Activated T-helper 2 cell treated with anti-CD3 and anti-CD28 coated beads, Interferon-gamma antibody, Interleukin-2, Interleukin-4, amounts not matched to agents 10 μg/mL and 5 μg/mL and 100 μg/mL, durations not matched to agents 14 hours and 24 hours and 36 hours (primary cell): ENCODE measurements at regions of chr18 and their contacts with region 1.

Region 1: DNA sequence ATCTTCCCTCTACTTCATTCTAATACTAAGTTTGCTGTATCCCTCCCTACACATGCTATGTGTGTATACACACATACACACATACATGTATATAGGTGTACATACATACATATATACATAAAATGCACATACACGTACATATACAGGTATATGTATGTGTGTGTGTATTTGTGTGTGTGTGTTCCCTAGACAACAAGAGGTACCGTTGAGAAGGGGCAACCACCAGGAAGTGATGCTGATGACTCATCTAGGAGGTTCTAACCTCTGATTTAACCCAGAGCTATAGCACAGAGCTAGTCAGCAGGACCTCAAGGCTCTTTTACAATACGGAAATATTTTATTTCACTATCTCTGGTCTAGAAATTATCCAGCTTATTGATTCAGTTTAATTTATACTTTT is 139.2 kb downstream of the LAMA3 start:
- DNase-seq: peak; percentile 52
- H3K4me3 Mint-ChIP-seq: no peak overlapping the region
- H3K27ac Mint-ChIP-seq: peak overlapping the region; percentile 76
- H3K4me1 Mint-ChIP-seq: peaks cover 46% of the 10 kb centered on the region
- H3K27me3 Mint-ChIP-seq: no peaks in the 10 kb centered on the region

Region 2: DNA sequence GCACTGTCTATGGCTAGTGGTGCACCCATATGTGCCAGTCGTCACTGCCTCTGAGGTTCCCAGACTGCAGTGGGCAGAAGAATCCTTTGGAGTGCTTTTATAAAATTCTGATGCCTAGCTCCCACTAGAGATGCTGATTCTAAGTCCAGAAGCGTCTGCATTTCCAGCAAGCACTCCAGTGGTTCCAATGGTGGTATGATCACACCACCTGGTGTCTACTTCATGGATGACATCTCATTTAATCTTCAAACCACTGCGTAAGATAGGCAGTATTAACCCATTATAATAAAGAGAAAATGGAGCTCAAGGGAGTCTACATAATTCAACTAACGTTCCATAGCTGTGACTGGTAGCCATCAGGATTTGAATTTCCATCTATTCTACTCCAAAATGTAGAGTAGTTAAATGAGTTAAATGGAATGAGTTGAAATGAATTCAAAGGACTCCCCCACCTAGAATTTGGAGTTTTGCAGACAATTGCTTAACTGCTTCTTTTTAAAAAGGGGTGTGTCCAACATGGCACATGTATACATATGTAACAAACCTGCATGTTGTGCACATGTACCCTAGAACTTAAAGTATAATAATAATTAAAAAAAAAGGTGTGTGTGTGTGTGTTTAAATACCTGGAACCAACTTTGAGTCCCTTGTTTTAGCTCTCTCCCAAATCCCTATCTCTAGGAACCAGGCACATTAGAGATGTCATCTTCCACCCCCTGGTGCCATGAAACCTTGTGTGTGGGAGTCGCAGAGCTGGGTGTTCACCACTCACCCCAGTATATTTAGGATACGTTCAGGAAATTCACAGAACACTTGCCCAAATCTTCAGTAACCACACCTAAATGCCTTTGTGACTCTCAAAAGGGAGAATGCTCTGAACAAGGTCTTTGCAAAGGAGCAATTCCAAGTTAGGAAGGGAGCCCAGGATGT is 125.1 kb before region 1 on chr18:
- intact Hi-C with region 1: no loop called
- DNase-seq: no peak
- H3K4me3 Mint-ChIP-seq: no peak overlapping the region
- H3K27ac Mint-ChIP-seq: no peak overlapping the region
- H3K4me1 Mint-ChIP-seq: no peaks in the 10 kb centered on the region
- H3K27me3 Mint-ChIP-seq: peaks cover 54% of the 10 kb centered on the region

Region 3: GRCh38 chr18:23838801-23839366 is 10.5 kb after region 1 on chr18:
- intact Hi-C with region 1: loop called (anchors 1 kb)
- DNase-seq: no peak
- H3K4me3 Mint-ChIP-seq: no peak overlapping the region
- H3K27ac Mint-ChIP-seq: no peak overlapping the region
- H3K4me1 Mint-ChIP-seq: peaks cover 7% of the 10 kb centered on the region
- H3K27me3 Mint-ChIP-seq: peaks cover 8% of the 10 kb centered on the region

Region 4: GRCh38 chr18:23883277-23883790 is 54.9 kb after region 1 on chr18:
- intact Hi-C with region 1: loop called (anchors 5 kb)
- DNase-seq: no peak
- H3K4me3 Mint-ChIP-seq: no peak overlapping the region
- H3K27ac Mint-ChIP-seq: no peak overlapping the region
- H3K4me1 Mint-ChIP-seq: peaks cover 26% of the 10 kb centered on the region
- H3K27me3 Mint-ChIP-seq: peaks cover 15% of the 10 kb centered on the region

Region 5: DNA sequence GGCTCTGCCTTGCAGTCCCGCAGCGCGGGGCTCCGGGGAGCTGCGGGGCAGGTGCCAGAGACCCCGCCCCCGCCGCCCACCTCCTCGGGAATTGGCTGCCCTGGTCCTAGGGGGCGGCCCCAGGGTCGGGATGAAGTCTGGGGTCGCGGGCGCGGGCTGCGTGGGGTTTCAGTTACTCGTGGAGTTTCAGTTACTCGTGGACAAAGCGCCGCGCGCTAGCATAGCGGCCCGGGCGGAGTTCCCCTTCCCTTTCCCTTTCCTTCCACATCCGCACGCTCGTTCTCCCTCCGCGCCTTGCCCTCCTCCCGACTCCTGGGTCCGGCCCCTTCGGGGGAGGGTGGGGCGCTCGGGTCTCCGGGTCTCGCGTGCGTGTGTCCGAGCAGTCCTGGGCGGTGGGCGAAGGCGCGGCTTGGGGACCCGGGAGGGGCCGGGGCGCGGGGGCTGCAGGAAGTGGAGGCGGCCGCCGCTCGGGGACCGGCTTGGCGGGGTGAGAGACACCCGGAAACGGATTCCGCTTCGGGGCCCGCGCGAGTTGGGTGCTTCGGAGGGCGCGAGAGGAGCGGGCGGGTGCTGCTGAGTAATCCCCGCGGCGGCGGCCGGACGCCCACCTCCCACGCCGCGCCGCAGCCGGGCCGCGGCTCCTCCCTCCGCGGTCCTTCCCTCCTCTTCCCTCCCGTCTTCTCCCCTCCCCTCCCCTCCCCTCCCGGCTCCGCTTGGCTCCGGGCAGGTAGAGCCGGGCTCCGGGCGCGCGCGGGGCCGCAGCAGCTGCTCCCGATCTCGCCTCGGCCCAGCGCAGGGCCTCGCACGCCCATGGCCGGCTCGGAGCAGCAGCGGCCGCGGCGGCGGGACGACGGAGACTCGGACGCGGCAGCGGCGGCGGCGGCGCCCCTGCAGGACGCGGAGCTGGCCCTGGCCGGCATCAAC is 185.9 kb after region 1 on chr18 and contains the start of gene TTC39C:
- intact Hi-C with region 1: loop called (anchors 5 kb)
- DNase-seq: peak; percentile 80
- H3K4me3 Mint-ChIP-seq: peak within 1 kb of the TSS; percentile 92
- H3K27ac Mint-ChIP-seq: peak within 1 kb of the TSS; percentile 84
- H3K4me1 Mint-ChIP-seq: peaks cover 73% of the 10 kb centered on the region
- H3K27me3 Mint-ChIP-seq: no peaks in the 10 kb centered on the region
- total RNA-seq, gene TTC39C: 14.3 and 20.1 TPM in 2 replicates

Region 6: DNA sequence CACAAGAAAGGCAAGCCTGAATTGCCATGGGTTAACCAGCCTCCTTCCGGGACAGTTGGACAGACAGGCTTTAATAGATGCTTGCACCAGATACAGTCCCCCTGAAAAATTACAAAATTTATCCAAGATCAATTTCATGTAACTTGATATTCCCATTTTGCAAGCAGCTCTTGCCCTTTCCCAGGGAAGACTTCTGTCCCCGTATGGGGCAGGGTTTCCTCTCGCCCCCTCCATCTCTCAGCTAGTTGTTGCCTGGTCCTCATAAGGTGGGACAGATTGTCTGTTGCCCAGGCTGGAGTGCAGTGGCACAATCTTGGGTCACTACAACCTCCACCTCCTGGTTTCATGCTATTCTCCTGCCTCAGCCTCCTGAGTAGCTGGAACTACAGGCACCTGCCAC is 247.3 kb after region 1 on chr18:
- intact Hi-C with region 1: loop called (anchors 5 kb)
- DNase-seq: no peak
- H3K4me3 Mint-ChIP-seq: no peak overlapping the region
- H3K27ac Mint-ChIP-seq: peak overlapping the region; percentile 77
- H3K4me1 Mint-ChIP-seq: peaks cover 32% of the 10 kb centered on the region
- H3K27me3 Mint-ChIP-seq: no peaks in the 10 kb centered on the region